ENCODE measurements at regions of chr5 and their contacts with region 1.

Region 1: DNA sequence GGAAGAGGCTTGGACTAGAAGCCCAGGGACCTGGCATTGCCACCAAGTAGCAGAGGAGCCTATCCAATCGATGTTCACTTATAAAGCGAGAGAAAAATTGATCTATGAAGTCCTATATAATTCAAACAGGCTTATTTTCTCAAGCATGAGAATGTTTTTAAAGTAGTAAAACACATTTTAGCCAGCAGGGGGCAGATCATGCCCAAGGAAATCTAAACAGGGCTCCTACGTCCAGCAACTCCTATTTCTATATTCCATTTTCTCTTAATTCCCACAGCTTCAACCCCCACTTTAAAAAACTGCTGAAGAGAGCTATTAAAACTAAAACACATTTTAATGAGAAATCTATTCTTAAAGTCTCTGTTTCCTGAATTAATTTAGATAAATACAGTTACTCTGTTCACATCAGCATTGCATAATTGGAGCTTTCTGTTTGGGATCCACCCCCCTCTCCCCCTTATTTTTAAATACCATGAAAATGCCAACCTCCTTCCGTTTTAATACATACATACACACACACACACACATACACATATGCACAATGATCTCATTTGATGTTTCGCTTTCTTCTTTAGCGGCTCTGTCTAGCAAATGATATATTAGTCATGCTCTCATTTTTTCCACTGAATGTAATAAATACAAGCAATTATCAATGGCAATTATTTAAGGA is 144.9 kb downstream of the MYO10 start:
- DNase-seq: peak; percentile 58

Region 2: GRCh38 chr5:17189381-17190036 is 398.3 kb after region 1 on chr5:
- in situ Hi-C with region 1: loop called (anchors 25 kb)
- DNase-seq: peak; percentile 75